Endothelial cell of umbilical vein (primary cell): ENCODE measurements at regions of chr9 and their contacts with region 1.

Region 1: GRCh38 chr9:79012561-79012960 is 559.2 kb upstream of the TLE4 start:
- DNase-seq: peak; percentile 70
- H3K4me3 ChIP-seq: no peak overlapping the region
- H3K27ac ChIP-seq: peak overlapping the region; percentile 98
- H3K4me1 ChIP-seq: peaks cover 45% of the 10 kb centered on the region
- H3K27me3 ChIP-seq: no peaks in the 10 kb centered on the region
- CTCF ChIP-seq: no peak
- POLR2A ChIP-seq: no peak

Region 2: GRCh38 chr9:78820855-78821822 is 191.4 kb before region 1 on chr9:
- CTCF ChIA-PET with region 1: no interaction called
- POLR2A ChIA-PET with region 1: no interaction called
- dilution Hi-C with region 1: no loop called
- intact Hi-C with region 1: loop called (anchors 1 kb)
- DNase-seq: peak; percentile 55
- H3K4me3 ChIP-seq: peak overlapping the region in 1 of 3 experiments; percentile 34
- H3K27ac ChIP-seq: peak overlapping the region; percentile 14
- H3K4me1 ChIP-seq: no peaks in the 10 kb centered on the region
- H3K27me3 ChIP-seq: no peaks in the 10 kb centered on the region
- CTCF ChIP-seq: peak; percentile 49 to 52
- POLR2A ChIP-seq: no peak

Region 3: DNA sequence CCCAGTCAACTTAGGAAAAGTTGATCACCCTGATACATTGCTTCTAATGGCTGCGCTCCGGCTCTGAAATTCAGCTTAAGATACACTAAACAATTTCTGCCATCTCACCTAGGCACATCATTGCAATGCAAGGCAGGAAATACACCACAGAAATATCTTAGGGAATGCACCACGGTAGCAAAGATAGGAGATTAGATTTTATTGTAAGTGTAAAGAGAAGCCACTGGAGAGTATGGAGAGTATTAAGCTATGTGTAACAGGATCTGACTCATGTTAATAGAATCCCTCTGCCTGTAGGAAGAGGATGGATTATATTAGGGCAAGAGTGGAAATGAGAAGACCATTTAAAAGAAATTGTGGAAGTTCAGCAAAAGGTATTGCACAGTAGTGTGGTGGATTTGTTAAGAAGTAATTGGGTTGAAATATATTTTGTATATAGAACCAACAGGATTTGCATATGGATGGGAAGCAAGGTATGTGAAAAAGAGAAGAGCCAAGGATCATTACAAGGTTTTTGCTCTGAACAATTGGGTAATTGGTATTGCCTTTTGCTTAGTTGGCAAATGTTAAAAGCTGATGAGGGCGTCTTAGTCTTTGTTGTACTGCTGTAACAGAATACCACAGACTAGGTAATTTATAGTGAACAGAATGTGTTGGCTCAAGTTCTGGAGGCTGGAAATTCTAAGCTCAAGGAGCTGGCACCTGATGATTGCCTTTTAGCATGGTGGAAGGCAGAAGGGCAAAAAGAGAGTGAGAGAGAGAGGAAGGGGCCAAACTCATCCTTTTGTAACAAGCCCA is 79.5 kb before region 1 on chr9:
- CTCF ChIA-PET with region 1: no interaction called
- POLR2A ChIA-PET with region 1: no interaction called
- dilution Hi-C with region 1: no loop called
- intact Hi-C with region 1: loop called (anchors 1 kb)
- DNase-seq: peak; percentile 74
- H3K4me3 ChIP-seq: no peak overlapping the region
- H3K27ac ChIP-seq: peak overlapping the region; percentile 90
- H3K4me1 ChIP-seq: peaks cover 19% of the 10 kb centered on the region
- H3K27me3 ChIP-seq: no peaks in the 10 kb centered on the region
- CTCF ChIP-seq: no peak
- POLR2A ChIP-seq: no peak

Region 4: GRCh38 chr9:79023134-79023577 is 10.6 kb after region 1 on chr9:
- CTCF ChIA-PET with region 1: interaction called, 6 read pairs
- POLR2A ChIA-PET with region 1: interaction called, 5 read pairs
- dilution Hi-C with region 1: no loop called
- intact Hi-C with region 1: loop called (anchors 1 kb)
- DNase-seq: peak; percentile 79
- H3K4me3 ChIP-seq: no peak overlapping the region
- H3K27ac ChIP-seq: peak overlapping the region; percentile 90
- H3K4me1 ChIP-seq: peaks cover 19% of the 10 kb centered on the region
- H3K27me3 ChIP-seq: no peaks in the 10 kb centered on the region
- CTCF ChIP-seq: no peak
- POLR2A ChIP-seq: no peak

Region 5: DNA sequence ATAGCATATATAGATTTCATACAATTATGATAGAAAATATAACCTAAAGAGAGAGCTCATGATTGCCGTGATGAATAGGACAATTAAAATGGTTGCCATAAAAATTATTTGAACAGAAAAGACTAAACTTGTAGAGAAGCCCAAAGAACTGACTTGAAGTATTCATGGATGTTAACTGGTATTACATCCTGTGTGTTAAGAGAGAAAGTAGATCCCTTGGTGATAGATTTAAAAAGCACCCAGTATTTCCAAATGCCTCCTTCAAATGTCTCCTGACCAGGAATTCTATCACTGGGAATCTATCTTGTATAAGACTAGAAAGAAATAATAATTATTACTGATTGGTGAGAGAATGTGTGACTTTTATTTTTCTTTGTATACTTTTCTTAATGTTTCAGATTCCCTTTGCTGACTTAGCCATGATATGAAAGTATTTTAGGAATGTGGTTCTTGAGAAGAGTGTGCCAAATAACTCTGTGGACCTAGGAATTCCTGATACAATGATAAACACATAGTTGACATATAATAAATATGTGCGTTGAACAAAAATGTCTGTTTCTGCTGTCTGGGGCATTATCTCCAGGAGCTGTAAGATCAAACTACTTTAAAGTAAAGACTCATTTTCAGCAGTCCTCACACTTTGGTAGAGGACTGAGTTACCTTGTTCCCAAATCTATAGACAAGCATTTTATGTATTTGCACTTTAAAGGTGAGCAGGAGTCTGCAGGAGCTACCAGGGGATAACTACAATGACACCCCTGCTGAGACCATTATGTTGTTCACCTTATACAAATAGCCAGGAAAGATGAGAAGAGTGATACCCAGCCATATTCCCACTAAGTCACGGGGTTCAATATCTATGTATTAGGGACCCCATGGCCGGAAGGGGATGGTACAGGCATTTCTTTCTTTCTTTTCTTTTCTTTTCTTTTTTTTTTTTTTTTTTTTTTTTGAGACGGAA is 348.1 kb after region 1 on chr9:
- CTCF ChIA-PET with region 1: no interaction called
- POLR2A ChIA-PET with region 1: no interaction called
- dilution Hi-C with region 1: no loop called
- intact Hi-C with region 1: no loop called
- DNase-seq: peak; percentile 14
- H3K4me3 ChIP-seq: no peak overlapping the region
- H3K27ac ChIP-seq: no peak overlapping the region
- H3K4me1 ChIP-seq: no peaks in the 10 kb centered on the region
- H3K27me3 ChIP-seq: no peaks in the 10 kb centered on the region
- CTCF ChIP-seq: no peak
- POLR2A ChIP-seq: no peak

Region 6: GRCh38 chr9:79682076-79682736 is 669.6 kb after region 1 on chr9:
- CTCF ChIA-PET with region 1: no interaction called
- POLR2A ChIA-PET with region 1: no interaction called
- dilution Hi-C with region 1: no loop called
- intact Hi-C with region 1: loop called (anchors 5 kb)
- DNase-seq: peak; percentile 79
- H3K4me3 ChIP-seq: no peak overlapping the region
- H3K27ac ChIP-seq: peak overlapping the region; percentile 45
- H3K4me1 ChIP-seq: peaks cover 14% of the 10 kb centered on the region
- H3K27me3 ChIP-seq: no peaks in the 10 kb centered on the region
- CTCF ChIP-seq: no peak
- POLR2A ChIP-seq: no peak

Region 7: DNA sequence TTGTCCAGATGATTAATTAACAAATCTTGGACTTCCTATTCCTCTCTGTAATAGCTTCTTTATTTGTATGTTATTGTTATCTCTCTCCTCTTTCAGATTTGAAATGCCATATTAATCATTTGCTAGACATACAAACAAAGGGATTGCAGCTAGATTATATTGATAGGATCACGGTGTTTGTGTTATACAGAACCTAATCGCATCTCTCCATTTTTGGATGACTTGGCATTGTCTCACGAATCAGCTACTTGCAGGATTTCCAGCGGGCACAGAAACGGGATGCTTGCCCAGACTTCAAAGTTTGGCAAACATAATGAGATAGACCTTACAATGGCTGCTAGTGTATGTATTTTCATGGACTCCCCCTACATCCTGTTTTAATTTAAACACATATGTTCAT is 927.3 kb after region 1 on chr9:
- CTCF ChIA-PET with region 1: no interaction called
- POLR2A ChIA-PET with region 1: no interaction called
- dilution Hi-C with region 1: no loop called
- intact Hi-C with region 1: no loop called
- DNase-seq: peak; percentile 32
- H3K4me3 ChIP-seq: no peak overlapping the region
- H3K27ac ChIP-seq: no peak overlapping the region
- H3K4me1 ChIP-seq: peaks cover 19% of the 10 kb centered on the region
- H3K27me3 ChIP-seq: no peaks in the 10 kb centered on the region
- CTCF ChIP-seq: no peak
- POLR2A ChIP-seq: no peak